ENCODE measurements at regions of chr17 and their contacts with region 1.

Region 1: GRCh38 chr17:59786536-59787319 is 79.3 kb downstream of the VMP1 start:
- DNase-seq: peak; percentile 93
- H3K4me3 Mint-ChIP-seq: peak overlapping the region; percentile 64
- H3K27ac Mint-ChIP-seq: peak overlapping the region; percentile 100
- H3K4me1 Mint-ChIP-seq: peaks cover 60% of the 10 kb centered on the region
- H3K27me3 Mint-ChIP-seq: no peaks in the 10 kb centered on the region

Region 2: GRCh38 chr17:59762513-59763374 is 24.0 kb before region 1 on chr17:
- CTCF ChIA-PET with region 1: interaction called, 4 read pairs
- intact Hi-C with region 1: loop called (anchors 1 kb)
- DNase-seq: peak; percentile 51
- H3K4me3 Mint-ChIP-seq: peak overlapping the region; percentile 35
- H3K27ac Mint-ChIP-seq: peak overlapping the region; percentile 98
- H3K4me1 Mint-ChIP-seq: peaks cover 67% of the 10 kb centered on the region
- H3K27me3 Mint-ChIP-seq: no peaks in the 10 kb centered on the region

Region 3: GRCh38 chr17:59829217-59830006 is 42.7 kb after region 1 on chr17:
- CTCF ChIA-PET with region 1: interaction called, 6 read pairs
- intact Hi-C with region 1: loop called (anchors 1 kb)
- DNase-seq: peak; percentile 79
- H3K4me3 Mint-ChIP-seq: peak overlapping the region; percentile 77
- H3K27ac Mint-ChIP-seq: peak overlapping the region; percentile 99
- H3K4me1 Mint-ChIP-seq: peaks cover 85% of the 10 kb centered on the region
- H3K27me3 Mint-ChIP-seq: no peaks in the 10 kb centered on the region

Region 4: DNA sequence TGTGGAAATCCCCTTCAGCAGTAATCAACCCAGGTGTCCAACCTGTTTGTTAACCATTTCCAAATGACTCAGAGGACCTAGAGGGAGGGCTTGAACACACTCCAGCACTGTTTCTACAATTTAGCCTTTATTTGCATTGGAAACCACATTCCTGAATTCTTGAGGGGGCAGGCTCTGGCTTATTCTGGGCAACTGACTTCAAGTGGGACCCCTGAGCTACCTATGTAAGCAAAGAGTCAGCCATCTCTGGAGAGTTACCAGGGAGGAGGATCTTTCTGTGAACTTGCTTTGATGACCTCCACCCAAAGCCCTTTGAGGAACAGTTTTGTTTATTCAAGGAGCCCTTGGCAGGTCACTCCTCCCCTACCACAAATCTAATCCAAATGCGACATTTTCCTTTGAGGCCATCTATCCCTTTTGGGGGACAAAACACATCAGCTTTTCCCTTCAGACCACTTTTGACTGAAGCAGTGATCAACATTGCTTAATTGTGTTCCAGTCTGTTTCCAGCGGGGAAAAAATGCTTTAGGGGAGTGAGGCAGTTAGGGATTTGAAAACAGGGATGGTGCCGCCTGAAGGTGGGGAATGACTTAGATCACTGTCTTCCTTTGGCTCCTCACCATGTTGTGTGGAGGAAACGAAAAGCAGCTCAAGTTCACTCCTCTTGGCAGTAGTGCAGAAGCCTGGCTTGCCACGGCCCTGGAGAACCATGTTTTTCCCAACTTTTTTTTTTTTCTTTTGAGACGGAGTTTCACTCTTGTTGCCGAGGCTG is 59.9 kb after region 1 on chr17:
- CTCF ChIA-PET with region 1: interaction called, 6 read pairs
- intact Hi-C with region 1: loop called (anchors 1 kb)
- DNase-seq: peak; percentile 53
- H3K4me3 Mint-ChIP-seq: peak overlapping the region; percentile 28
- H3K27ac Mint-ChIP-seq: peak overlapping the region; percentile 100
- H3K4me1 Mint-ChIP-seq: peaks cover 76% of the 10 kb centered on the region
- H3K27me3 Mint-ChIP-seq: no peaks in the 10 kb centered on the region

Region 5: GRCh38 chr17:60231234-60231633 is 444.5 kb after region 1 on chr17:
- CTCF ChIA-PET with region 1: no interaction called
- intact Hi-C with region 1: no loop called
- DNase-seq: no peak
- H3K4me3 Mint-ChIP-seq: no peak overlapping the region
- H3K27ac Mint-ChIP-seq: no peak overlapping the region
- H3K4me1 Mint-ChIP-seq: peaks cover 6% of the 10 kb centered on the region
- H3K27me3 Mint-ChIP-seq: no peaks in the 10 kb centered on the region